CD8-positive, alpha-beta T cell (primary cell): ENCODE measurements at regions of chr17 and their contacts with region 1.

Region 1: DNA sequence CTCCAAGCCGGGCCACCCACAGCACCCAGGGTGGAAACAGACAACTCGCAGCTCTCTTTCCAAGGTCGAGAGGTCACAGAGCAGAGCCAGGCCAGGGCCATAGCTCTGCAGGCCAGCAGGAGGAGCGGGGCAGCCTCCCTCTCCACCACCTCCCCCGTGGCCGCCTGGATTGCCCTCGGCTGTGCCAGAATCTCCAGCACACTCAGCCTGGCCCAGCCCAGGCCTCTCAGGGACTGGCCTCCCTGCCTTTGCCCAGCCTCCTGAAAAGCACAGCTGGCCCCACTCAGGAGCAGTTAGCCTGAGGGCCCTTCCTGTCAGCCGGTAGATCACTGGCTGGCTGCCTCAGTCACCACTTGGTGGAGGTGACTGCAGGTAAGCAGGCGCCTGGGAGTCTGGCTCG is 85.8 kb upstream of the SEC14L1 start:
- DNase-seq: no peak
- ATAC-seq: no peak
- H3K4me3 ChIP-seq: no peak overlapping the region
- H3K4me3 Mint-ChIP-seq: no peak overlapping the region
- H3K27ac ChIP-seq: no peak overlapping the region
- H3K27ac Mint-ChIP-seq: no peak overlapping the region
- H3K4me1 ChIP-seq: no peaks in the 10 kb centered on the region
- H3K4me1 Mint-ChIP-seq: peaks cover 2% of the 10 kb centered on the region
- H3K27me3 ChIP-seq: peaks cover 0 to 7% of the 10 kb centered on the region in 2 experiments
- H3K27me3 Mint-ChIP-seq: peaks cover 22% of the 10 kb centered on the region
- CTCF ChIP-seq: no peak

Region 2: GRCh38 chr17:76816590-76817135 is 238.3 kb before region 1 on chr17:
- CTCF ChIA-PET with region 1: no interaction called
- POLR2A ChIA-PET with region 1: no interaction called
- intact Hi-C with region 1: loop called in 1 of 2 experiments (anchors 1 kb)
- DNase-seq: peak; percentile 14 to 78 (median 65)
- ATAC-seq: peak; percentile 97
- H3K4me3 ChIP-seq: no peak overlapping the region
- H3K4me3 Mint-ChIP-seq: peak overlapping the region; percentile 3
- H3K27ac ChIP-seq: no peak overlapping the region
- H3K27ac Mint-ChIP-seq: no peak overlapping the region
- H3K4me1 ChIP-seq: peaks cover 7% of the 10 kb centered on the region
- H3K4me1 Mint-ChIP-seq: peaks cover 8% of the 10 kb centered on the region
- H3K27me3 ChIP-seq: no peaks in the 10 kb centered on the region
- H3K27me3 Mint-ChIP-seq: no peaks in the 10 kb centered on the region
- CTCF ChIP-seq: peak; percentile 76

Region 3: DNA sequence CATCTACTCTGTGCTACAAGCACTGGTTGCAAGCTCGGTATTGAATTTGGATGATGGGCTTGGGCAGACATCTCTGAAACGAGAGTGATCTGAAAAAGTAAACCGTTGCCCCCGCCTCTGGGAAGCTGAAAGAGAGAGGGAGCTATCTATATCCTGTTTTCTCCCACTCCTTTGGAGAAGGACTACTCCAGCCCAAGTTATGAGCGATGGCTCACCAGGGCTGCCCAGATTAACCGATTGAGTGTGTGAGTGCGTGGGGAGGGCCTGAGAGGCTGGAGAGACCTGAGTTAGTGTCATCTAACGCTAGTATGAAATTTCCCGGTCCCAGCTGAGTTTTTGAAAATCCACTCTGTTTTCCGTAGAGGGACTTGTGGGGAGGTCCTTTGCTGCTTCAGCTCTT is 175.2 kb before region 1 on chr17:
- CTCF ChIA-PET with region 1: interaction called, 13 read pairs
- POLR2A ChIA-PET with region 1: no interaction called
- intact Hi-C with region 1: no loop called
- DNase-seq: no peak
- ATAC-seq: no peak
- H3K4me3 ChIP-seq: no peak overlapping the region
- H3K4me3 Mint-ChIP-seq: no peak overlapping the region
- H3K27ac ChIP-seq: no peak overlapping the region
- H3K27ac Mint-ChIP-seq: no peak overlapping the region
- H3K4me1 ChIP-seq: no peaks in the 10 kb centered on the region
- H3K4me1 Mint-ChIP-seq: no peaks in the 10 kb centered on the region
- H3K27me3 ChIP-seq: no peaks in the 10 kb centered on the region
- H3K27me3 Mint-ChIP-seq: no peaks in the 10 kb centered on the region
- CTCF ChIP-seq: no peak

Region 4: DNA sequence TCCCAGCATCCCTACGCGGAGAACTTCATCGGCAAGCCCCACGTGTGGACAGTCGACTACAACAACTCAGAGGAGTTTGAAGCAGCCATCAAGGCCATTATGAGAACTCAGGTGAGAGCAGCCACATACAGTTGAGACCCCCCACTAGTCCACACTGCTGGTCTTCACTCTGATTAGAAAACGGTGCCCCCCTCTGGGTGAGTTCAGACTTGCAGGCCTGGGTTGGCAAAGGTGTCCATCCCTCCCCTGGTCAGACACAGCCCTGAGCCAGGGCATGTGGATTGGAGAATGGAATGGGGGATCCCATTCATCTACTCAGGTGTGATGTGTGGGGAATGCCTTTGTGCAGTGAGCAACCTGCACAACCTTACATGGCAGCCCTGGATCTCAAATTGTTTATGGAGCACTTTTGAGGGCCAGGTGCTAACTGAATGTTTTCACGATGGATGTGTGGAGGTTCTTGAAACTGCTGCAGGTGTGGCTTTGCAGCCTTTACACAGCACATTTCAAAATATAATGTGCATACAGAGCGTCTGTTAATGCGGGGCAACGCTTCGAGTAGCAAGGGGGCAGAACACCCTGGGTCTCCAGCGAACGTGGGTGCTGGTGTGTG is 114.1 kb before region 1 on chr17:
- CTCF ChIA-PET with region 1: interaction called, 5 read pairs
- POLR2A ChIA-PET with region 1: no interaction called
- intact Hi-C with region 1: loop called in 1 of 2 experiments (anchors 10 kb)
- DNase-seq: no peak
- ATAC-seq: no peak
- H3K4me3 ChIP-seq: no peak overlapping the region
- H3K4me3 Mint-ChIP-seq: no peak overlapping the region
- H3K27ac ChIP-seq: no peak overlapping the region
- H3K27ac Mint-ChIP-seq: no peak overlapping the region
- H3K4me1 ChIP-seq: no peaks in the 10 kb centered on the region
- H3K4me1 Mint-ChIP-seq: no peaks in the 10 kb centered on the region
- H3K27me3 ChIP-seq: peaks cover 0 to 3% of the 10 kb centered on the region in 2 experiments
- H3K27me3 Mint-ChIP-seq: no peaks in the 10 kb centered on the region
- CTCF ChIP-seq: no peak

Region 5: GRCh38 chr17:77034677-77035424 is 20.1 kb before region 1 on chr17:
- CTCF ChIA-PET with region 1: interaction called, 14 read pairs
- POLR2A ChIA-PET with region 1: no interaction called
- intact Hi-C with region 1: no loop called
- DNase-seq: no peak
- ATAC-seq: no peak
- H3K4me3 ChIP-seq: no peak overlapping the region
- H3K4me3 Mint-ChIP-seq: no peak overlapping the region
- H3K27ac ChIP-seq: no peak overlapping the region
- H3K27ac Mint-ChIP-seq: no peak overlapping the region
- H3K4me1 ChIP-seq: no peaks in the 10 kb centered on the region
- H3K4me1 Mint-ChIP-seq: no peaks in the 10 kb centered on the region
- H3K27me3 ChIP-seq: peaks cover 0 to 2% of the 10 kb centered on the region in 2 experiments
- H3K27me3 Mint-ChIP-seq: peaks cover 16% of the 10 kb centered on the region
- CTCF ChIP-seq: no peak